Natural killer cell (primary cell): ENCODE measurements at regions of chrX and their contacts with region 1.

Region 1: GRCh38 chrX:124217304-124218251 is 114.9 kb upstream of the TEX13D start:
- DNase-seq: peak; percentile 18 to 81
- ATAC-seq: peak; percentile 65 to 75 (median 73)
- H3K4me3 ChIP-seq: no peak overlapping the region
- H3K4me3 Mint-ChIP-seq: peak overlapping the region; percentile 68
- H3K27ac ChIP-seq: peak overlapping the region; percentile 79
- H3K27ac Mint-ChIP-seq: peak overlapping the region; percentile 85 to 94
- H3K4me1 ChIP-seq: peaks cover 39% of the 10 kb centered on the region
- H3K4me1 Mint-ChIP-seq: peaks cover 51 to 64% of the 10 kb centered on the region in 2 donors
- H3K27me3 ChIP-seq: no peaks in the 10 kb centered on the region
- H3K27me3 Mint-ChIP-seq: peaks cover 0 to 10% of the 10 kb centered on the region in 2 donors
- CTCF ChIP-seq: no peak

Region 2: GRCh38 chrX:124338733-124339514 is 121.3 kb after region 1 on chrX:
- intact Hi-C with region 1: loop called (anchors 2 kb)
- DNase-seq: peak; percentile 33 to 79
- ATAC-seq: peak; percentile 63 to 85 (median 78)
- H3K4me3 ChIP-seq: no peak overlapping the region
- H3K4me3 Mint-ChIP-seq: peak overlapping the region; percentile 1
- H3K27ac ChIP-seq: peak overlapping the region; percentile 50
- H3K27ac Mint-ChIP-seq: peak overlapping the region; percentile 80
- H3K4me1 ChIP-seq: peaks cover 22% of the 10 kb centered on the region
- H3K4me1 Mint-ChIP-seq: peaks cover 43% of the 10 kb centered on the region in 2 donors
- H3K27me3 ChIP-seq: no peaks in the 10 kb centered on the region
- H3K27me3 Mint-ChIP-seq: peaks cover 0 to 8% of the 10 kb centered on the region in 2 donors
- CTCF ChIP-seq: no peak